ENCODE measurements at regions of chr15 and their contacts with region 1.

Region 1: DNA sequence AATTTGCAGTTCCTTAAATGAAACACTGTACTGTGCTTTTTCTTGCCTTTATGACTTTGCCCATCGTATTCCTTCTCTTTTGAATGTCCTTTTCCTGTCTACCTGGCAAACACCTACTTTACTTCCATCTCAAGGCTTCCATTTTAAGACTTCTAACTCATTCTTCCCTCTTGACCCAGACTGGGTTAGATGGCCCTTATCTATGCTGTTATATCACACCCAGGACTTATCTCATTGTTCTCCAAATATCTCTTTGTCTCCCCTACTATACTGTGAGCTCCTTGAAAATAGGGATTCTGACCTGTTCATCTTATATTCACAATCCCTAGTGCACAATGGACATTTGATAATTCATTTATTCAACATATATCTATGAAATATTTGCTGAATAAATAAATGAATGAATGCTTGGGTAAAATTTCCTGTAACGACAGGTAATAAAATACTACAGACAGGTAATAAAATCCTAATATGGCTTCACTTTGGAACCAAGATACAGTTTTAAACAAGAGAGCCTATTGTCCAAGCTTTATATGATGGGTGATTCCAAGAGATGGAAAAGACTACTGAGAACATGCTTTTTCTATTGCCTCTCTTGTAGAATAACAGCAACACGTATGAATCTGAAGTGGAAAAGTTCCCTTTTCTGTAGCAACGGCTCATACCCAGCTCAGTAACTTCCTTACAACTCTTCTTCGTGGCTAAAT is 22.7 kb downstream of the EFL1 start:
- DNase-seq: no peak
- ATAC-seq: no peak
- H3K4me3 ChIP-seq: no peak overlapping the region
- H3K27ac ChIP-seq: no peak overlapping the region
- H3K4me1 ChIP-seq: no peaks in the 10 kb centered on the region
- H3K27me3 ChIP-seq: no peaks in the 10 kb centered on the region
- CTCF ChIP-seq: no peak
- EP300 ChIP-seq: no peak
- POLR2A ChIP-seq: no peak
- RAD21 ChIP-seq: no peak

Region 2: DNA sequence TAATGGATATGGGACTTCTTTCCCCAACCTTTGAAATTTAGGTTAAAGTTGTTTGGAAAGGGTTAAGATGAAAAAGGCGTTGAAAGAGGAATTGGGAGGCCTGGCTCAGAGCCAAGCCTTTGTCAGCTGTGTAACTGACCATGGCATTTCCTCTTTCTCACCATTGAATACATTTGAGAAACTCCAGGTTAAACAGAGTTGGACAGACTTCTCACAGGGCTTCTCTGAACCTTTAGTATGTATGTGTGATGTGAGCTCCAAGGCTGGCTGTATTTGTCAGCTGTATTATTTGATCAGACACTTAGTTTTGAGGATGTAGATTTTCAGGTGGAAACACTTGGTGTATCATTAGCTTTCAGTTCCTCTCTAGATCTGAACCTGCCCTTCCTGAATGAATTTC is 1859.3 kb after region 1 on chr15:
- CTCF ChIA-PET with region 1: no interaction called
- POLR2A ChIA-PET with region 1: no interaction called
- in situ Hi-C with region 1: loop called (anchors 5 kb)
- intact Hi-C with region 1: no loop called
- DNase-seq: peak in 1 of 4 experiments; percentile 36
- ATAC-seq: no peak
- H3K4me3 ChIP-seq: no peak overlapping the region
- H3K27ac ChIP-seq: no peak overlapping the region
- H3K4me1 ChIP-seq: no peaks in the 10 kb centered on the region; a peak in 1 of 5 replicates
- H3K27me3 ChIP-seq: peaks cover 0 to 2% of the 10 kb centered on the region in 2 experiments; a peak in 2 of 5 replicates
- CTCF ChIP-seq: no peak
- EP300 ChIP-seq: no peak
- POLR2A ChIP-seq: no peak
- RAD21 ChIP-seq: no peak

Measured in K562 (cell line).